Aorta (tissue), 5 donors: ENCODE measurements at regions of chr19 and their contacts with region 1.

Region 1: DNA sequence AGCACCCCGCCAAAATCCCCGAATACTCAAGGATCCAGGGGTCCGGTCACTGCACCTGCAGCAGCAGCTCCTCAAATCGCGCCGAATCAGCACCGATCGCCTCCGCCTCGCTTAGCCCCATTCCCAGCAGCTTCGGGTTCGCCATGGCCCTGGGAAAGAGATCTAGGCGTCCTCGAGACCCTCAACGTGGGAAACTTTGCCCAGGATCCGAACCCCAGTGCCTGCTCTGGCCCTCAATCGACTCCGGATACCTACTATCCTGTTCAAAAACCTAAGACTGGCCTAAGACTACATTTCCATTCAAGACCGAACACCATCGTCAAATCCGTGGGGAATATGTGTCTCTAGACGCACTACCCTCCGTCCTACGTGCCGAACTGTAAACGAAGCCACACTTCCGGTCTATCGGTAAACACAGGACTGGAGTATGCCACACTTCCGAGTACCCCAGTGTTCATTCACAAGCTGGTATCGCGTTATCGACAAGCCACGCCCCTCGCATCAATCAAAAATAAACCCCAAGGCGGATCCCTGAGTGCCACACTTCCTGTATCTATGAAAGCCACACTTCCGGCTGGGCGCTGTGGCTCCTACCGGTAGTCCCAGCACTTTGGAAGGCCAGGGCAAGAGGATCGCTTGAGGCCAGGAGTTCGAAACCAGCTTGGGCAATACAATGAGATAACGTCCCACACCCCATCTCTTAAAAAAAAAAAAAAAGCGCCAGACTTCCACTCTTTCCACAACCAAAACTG is at the start of gene PIH1D1:
- DNase-seq: peak; percentile 97 to 98
- ATAC-seq: peak; percentile 86
- H3K4me3 ChIP-seq: peak within 1 kb of the TSS; percentile 19 to 63
- H3K27ac ChIP-seq: peak within 1 kb of the TSS; percentile 33 to 77
- H3K4me1 ChIP-seq: no peaks in the 10 kb centered on the region
- H3K27me3 ChIP-seq: no peaks in the 10 kb centered on the region
- total RNA-seq, gene PIH1D1: 45.0 to 74.7 TPM

Region 2: DNA sequence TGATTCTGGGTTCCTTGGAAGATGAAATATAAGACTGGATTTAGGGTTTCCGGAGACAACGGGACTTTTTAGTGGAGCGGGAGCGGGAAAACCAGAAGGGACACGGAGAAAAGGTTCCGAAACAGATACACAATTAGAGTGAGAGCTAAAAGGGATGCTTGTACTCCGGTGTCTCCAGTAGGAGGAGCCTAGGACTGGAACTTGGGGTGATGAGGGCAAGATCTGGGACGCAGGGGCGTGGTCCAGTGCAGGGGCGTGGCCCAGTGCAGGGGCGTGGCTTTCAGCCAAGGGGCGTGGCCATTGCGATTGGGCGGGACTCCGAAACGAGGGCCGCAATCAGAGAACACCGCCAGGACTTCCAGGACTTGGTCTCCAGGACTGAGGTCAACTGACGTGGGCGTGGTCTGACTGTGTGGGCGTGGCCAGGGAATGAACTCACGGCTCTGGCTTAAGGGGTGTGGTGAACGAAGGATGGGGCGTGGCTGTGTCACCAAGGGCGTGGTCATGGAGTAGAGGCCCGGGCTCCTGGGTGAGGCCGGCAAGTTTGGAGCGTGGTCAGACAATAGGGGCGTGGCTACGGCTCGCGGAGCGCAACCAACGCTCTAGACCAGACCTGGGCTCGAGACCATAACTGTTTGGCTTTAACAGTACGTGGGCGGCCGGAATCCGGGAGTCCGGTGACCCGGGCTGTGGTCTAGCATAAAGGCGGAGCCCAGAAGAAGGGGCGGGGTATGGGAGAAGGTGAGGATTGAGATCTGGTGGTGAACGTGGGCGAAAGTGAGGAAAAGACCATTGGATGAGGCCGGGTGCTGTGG is 88.1 kb before region 1 on chr19 and contains the start of gene DKKL1:
- intact Hi-C with region 1: loop called in 1 of 2 experiments (anchors 2 kb)
- DNase-seq: peak; percentile 99 to 100
- ATAC-seq: peak; percentile 95
- H3K4me3 ChIP-seq: no peak within 1 kb of the TSS
- H3K27ac ChIP-seq: peak within 1 kb of the TSS in 1 of 2 donors; percentile 20
- H3K4me1 ChIP-seq: no peaks in the 10 kb centered on the region
- H3K27me3 ChIP-seq: no peaks in the 10 kb centered on the region
- total RNA-seq, gene DKKL1: 0.69 TPM in 1 of 2 donors, not detected in the other